ENCODE measurements at regions of chr1 and their contacts with region 1.

Region 1: GRCh38 chr1:226424228-226425003 is 16.5 kb upstream of the PARP1 start:
- DNase-seq: peak; percentile 26
- H3K4me3 Mint-ChIP-seq: no peak overlapping the region
- H3K27ac Mint-ChIP-seq: no peak overlapping the region
- H3K4me1 Mint-ChIP-seq: peaks cover 14% of the 10 kb centered on the region
- H3K27me3 Mint-ChIP-seq: no peaks in the 10 kb centered on the region

Region 2: DNA sequence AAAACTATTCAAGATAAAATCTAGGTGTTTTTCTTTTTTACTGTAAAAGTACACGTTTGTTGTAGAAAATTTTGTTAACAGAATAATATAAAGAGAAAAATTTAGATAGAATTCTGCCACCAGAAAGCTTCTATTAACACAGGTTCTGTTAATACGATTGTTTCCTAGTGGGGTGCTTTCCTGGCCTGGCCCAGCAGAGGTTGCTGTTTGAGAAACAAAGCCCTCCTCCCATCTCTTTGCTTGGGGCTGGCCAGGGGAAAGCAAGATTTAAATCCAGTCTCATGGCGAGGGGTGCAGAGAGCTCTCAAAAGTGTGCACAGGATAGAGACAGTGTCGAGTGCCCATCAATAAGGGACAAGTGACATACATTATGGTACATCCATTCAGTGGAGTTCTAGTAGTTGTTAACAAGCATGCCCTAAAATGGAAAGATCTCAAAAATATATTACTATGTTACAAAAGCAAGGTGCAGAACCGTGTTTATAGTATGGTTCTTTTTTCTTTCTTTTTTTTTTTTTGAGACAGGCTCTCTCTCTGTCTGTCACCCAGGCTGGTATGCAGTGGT is 223.3 kb before region 1 on chr1:
- CTCF ChIA-PET with region 1: no interaction called
- intact Hi-C with region 1: no loop called
- DNase-seq: peak; percentile 16
- H3K4me3 Mint-ChIP-seq: no peak overlapping the region
- H3K27ac Mint-ChIP-seq: no peak overlapping the region
- H3K4me1 Mint-ChIP-seq: no peaks in the 10 kb centered on the region
- H3K27me3 Mint-ChIP-seq: peaks cover 6% of the 10 kb centered on the region

Region 3: GRCh38 chr1:226407497-226408284 is 16.7 kb before region 1 on chr1 and contains the start of gene PARP1:
- CTCF ChIA-PET with region 1: interaction called, 12 read pairs
- intact Hi-C with region 1: loop called (anchors 1 kb)
- DNase-seq: peak; percentile 87
- H3K4me3 Mint-ChIP-seq: peak within 1 kb of the TSS; percentile 99
- H3K27ac Mint-ChIP-seq: peak within 1 kb of the TSS; percentile 98
- H3K4me1 Mint-ChIP-seq: peaks cover 39% of the 10 kb centered on the region
- H3K27me3 Mint-ChIP-seq: no peaks in the 10 kb centered on the region
- total RNA-seq, gene PARP1: 265 to 273 TPM

Region 4: GRCh38 chr1:226444901-226445300 is 20.5 kb after region 1 on chr1:
- CTCF ChIA-PET with region 1: interaction called, 4 read pairs
- intact Hi-C with region 1: loop called (anchors 2 kb)
- DNase-seq: peak; percentile 80
- H3K4me3 Mint-ChIP-seq: no peak overlapping the region
- H3K27ac Mint-ChIP-seq: peak overlapping the region; percentile 47
- H3K4me1 Mint-ChIP-seq: peaks cover 31% of the 10 kb centered on the region
- H3K27me3 Mint-ChIP-seq: no peaks in the 10 kb centered on the region

Region 5: DNA sequence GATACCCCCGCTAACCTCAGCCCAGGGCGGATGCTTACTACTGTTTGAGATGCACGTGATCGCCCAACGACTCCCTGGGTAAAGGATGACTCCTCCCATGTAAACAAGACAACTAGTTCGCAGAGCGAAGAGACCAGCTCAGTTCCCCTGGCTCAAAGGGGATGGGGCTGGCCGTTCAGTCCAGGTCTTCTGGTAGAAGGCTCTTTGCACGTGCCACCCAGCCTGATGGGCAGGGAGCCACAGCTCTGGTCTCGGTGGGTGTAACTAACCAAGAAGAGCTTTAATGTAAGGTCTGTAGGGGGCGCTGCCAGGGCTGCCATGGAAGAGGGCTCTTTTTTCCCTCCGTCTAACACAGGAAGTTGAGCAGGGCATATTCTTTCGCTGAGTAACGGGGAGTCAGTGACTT is 32.9 kb after region 1 on chr1:
- CTCF ChIA-PET with region 1: no interaction called
- intact Hi-C with region 1: loop called (anchors 1 kb)
- DNase-seq: peak; percentile 79
- H3K4me3 Mint-ChIP-seq: peak overlapping the region; percentile 43
- H3K27ac Mint-ChIP-seq: no peak overlapping the region
- H3K4me1 Mint-ChIP-seq: peaks cover 14% of the 10 kb centered on the region
- H3K27me3 Mint-ChIP-seq: no peaks in the 10 kb centered on the region

Region 6: DNA sequence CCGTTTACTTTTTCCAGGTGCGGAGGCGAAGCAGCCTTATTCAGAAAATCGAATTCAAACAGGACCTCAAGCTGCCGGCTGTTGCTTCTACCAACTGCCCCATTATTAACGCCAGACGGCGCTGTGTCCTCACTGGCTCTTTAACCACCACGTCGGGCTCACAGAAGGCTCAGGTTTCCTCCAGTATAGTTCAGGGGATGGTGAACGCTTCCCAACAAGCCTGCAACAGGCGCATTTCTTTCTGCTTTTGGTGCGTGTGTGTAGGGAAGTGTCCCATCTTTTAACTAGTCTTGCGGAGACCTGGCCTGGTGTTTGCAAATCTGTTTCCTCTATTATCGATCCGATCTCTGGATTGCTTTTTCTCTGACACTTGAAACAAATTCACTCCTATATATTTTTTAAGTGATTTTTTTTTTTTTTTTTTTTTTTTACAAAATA is 123.4 kb after region 1 on chr1:
- CTCF ChIA-PET with region 1: interaction called, 3 read pairs
- intact Hi-C with region 1: loop called (anchors 2 kb)
- DNase-seq: peak; percentile 82
- H3K4me3 Mint-ChIP-seq: no peak overlapping the region
- H3K27ac Mint-ChIP-seq: no peak overlapping the region
- H3K4me1 Mint-ChIP-seq: peaks cover 10% of the 10 kb centered on the region
- H3K27me3 Mint-ChIP-seq: peaks cover 33% of the 10 kb centered on the region

Region 7: GRCh38 chr1:226608699-226609505 is 184.5 kb after region 1 on chr1:
- CTCF ChIA-PET with region 1: interaction called, 6 read pairs
- intact Hi-C with region 1: loop called (anchors 1 kb)
- DNase-seq: peak; percentile 79
- H3K4me3 Mint-ChIP-seq: no peak overlapping the region
- H3K27ac Mint-ChIP-seq: no peak overlapping the region
- H3K4me1 Mint-ChIP-seq: no peaks in the 10 kb centered on the region
- H3K27me3 Mint-ChIP-seq: no peaks in the 10 kb centered on the region